CD14-positive monocyte (primary cell): ENCODE measurements at regions of chr3 and their contacts with region 1.

Region 1: DNA sequence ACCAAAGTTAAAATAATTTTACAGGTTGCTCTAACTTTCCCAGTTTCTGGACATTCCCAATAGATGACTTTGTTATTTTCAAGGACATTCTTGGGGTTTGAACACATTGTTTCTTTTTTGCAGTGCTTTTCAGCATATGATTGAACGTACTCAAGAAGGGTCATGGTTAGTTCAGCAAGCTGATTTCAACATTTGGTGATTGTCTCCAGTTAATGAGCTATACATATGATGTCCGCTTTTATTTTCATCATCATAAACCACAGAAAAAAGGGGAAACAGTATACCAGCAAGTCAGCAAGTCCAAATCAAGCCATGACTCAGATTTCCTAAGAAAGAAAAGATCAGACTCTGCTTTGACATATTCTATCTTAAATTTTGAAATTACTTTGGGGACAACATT is 69.4 kb downstream of the B3GALNT1 start:
- DNase-seq: peak; percentile 87 to 94 (median 94)
- H3K4me3 ChIP-seq: peak overlapping the region in 2 of 3 experiments; percentile 33 to 47
- H3K4me3 Mint-ChIP-seq: peak overlapping the region in 1 of 2 donors; percentile 78
- H3K27ac ChIP-seq: peak overlapping the region in 1 of 2 donors; percentile 84
- H3K27ac Mint-ChIP-seq: peak overlapping the region; percentile 95 to 98 (median 96)
- H3K4me1 ChIP-seq: peaks cover 19 to 29% of the 10 kb centered on the region in 2 donors
- H3K4me1 Mint-ChIP-seq: peaks cover 35% of the 10 kb centered on the region
- H3K27me3 ChIP-seq: no peaks in the 10 kb centered on the region
- H3K27me3 Mint-ChIP-seq: peaks cover 0 to 5% (median 3%) of the 10 kb centered on the region in 3 donors
- CTCF ChIP-seq: no peak

Region 2: GRCh38 chr3:160981217-160981938 is 54.3 kb before region 1 on chr3:
- intact Hi-C with region 1: loop called (anchors 2 to 5 kb)
- DNase-seq: peak; percentile 89 to 97 (median 93)
- H3K4me3 ChIP-seq: peak overlapping the region in 1 of 3 experiments; percentile 49
- H3K4me3 Mint-ChIP-seq: peak overlapping the region in 1 of 2 donors; percentile 15
- H3K27ac ChIP-seq: peak overlapping the region; percentile 72 to 88
- H3K27ac Mint-ChIP-seq: peak overlapping the region; percentile 93 to 98 (median 96)
- H3K4me1 ChIP-seq: peaks cover 63 to 69% of the 10 kb centered on the region in 2 donors
- H3K4me1 Mint-ChIP-seq: peaks cover 60% of the 10 kb centered on the region
- H3K27me3 ChIP-seq: no peaks in the 10 kb centered on the region
- H3K27me3 Mint-ChIP-seq: no peaks in the 10 kb centered on the region
- CTCF ChIP-seq: no peak

Region 3: GRCh38 chr3:161069511-161070263 is 34.0 kb after region 1 on chr3:
- intact Hi-C with region 1: loop called in 1 of 2 experiments (anchors 5 kb)
- DNase-seq: peak; percentile 75 to 86 (median 83)
- H3K4me3 ChIP-seq: peak overlapping the region in 1 of 3 experiments; percentile 0
- H3K4me3 Mint-ChIP-seq: peak overlapping the region; percentile 10 to 81
- H3K27ac ChIP-seq: peak overlapping the region; percentile 28 to 62
- H3K27ac Mint-ChIP-seq: peak overlapping the region; percentile 61 to 91 (median 82)
- H3K4me1 ChIP-seq: peaks cover 33 to 37% of the 10 kb centered on the region in 2 donors
- H3K4me1 Mint-ChIP-seq: peaks cover 43% of the 10 kb centered on the region
- H3K27me3 ChIP-seq: no peaks in the 10 kb centered on the region
- H3K27me3 Mint-ChIP-seq: peaks cover 0 to 2% (median 0%) of the 10 kb centered on the region in 3 donors
- CTCF ChIP-seq: no peak